ENCODE measurements at regions of chr16 and their contacts with region 1.

Region 1: GRCh38 chr16:30657866-30658730 is at the start of gene FBRS:
- DNase-seq: peak; percentile 99
- ATAC-seq: peak; percentile 81
- H3K4me3 ChIP-seq: peak within 1 kb of the TSS; percentile 89
- H3K27ac ChIP-seq: peak within 1 kb of the TSS; percentile 98
- H3K4me1 ChIP-seq: peaks cover 22% of the 10 kb centered on the region
- H3K27me3 ChIP-seq: no peaks in the 10 kb centered on the region
- CTCF ChIP-seq: peak; percentile 72 to 99 (median 75); a peak in 5 of 6 replicates
- EP300 ChIP-seq: no peak
- POLR2A ChIP-seq: peak; percentile 84
- RAD21 ChIP-seq: peak; percentile 35; the same call in 1 of the 2 replicates
- polyA plus RNA-seq, gene FBRS: 0.45 to 0.95 TPM

Region 2: GRCh38 chr16:30571695-30572600 is 86.2 kb before region 1 on chr16 and contains the start of gene ZNF688:
- CTCF ChIA-PET with region 1: no interaction called
- POLR2A ChIA-PET with region 1: no interaction called
- RAD21 ChIA-PET with region 1: no interaction called
- SMC1A ChIA-PET with region 1: no interaction called
- in situ Hi-C with region 1: no loop called
- intact Hi-C with region 1: loop called (anchors 10 kb)
- DNase-seq: peak; percentile 95
- ATAC-seq: peak; percentile 89
- H3K4me3 ChIP-seq: peak within 1 kb of the TSS; percentile 81
- H3K27ac ChIP-seq: peak within 1 kb of the TSS; percentile 93
- H3K4me1 ChIP-seq: peaks cover 26% of the 10 kb centered on the region
- H3K27me3 ChIP-seq: no peaks in the 10 kb centered on the region
- CTCF ChIP-seq: no peak
- EP300 ChIP-seq: no peak
- POLR2A ChIP-seq: peak; percentile 65
- RAD21 ChIP-seq: no peak
- polyA plus RNA-seq, gene ZNF688: 0.14 to 0.88 TPM

Region 3: GRCh38 chr16:30644334-30644830 is 13.7 kb before region 1 on chr16:
- CTCF ChIA-PET with region 1: interaction called, 3 read pairs
- POLR2A ChIA-PET with region 1: interaction called, 22 read pairs
- RAD21 ChIA-PET with region 1: interaction called, 5 read pairs
- SMC1A ChIA-PET with region 1: interaction called, 11 read pairs
- in situ Hi-C with region 1: no loop called
- intact Hi-C with region 1: no loop called
- DNase-seq: no peak
- ATAC-seq: no peak
- H3K4me3 ChIP-seq: no peak overlapping the region
- H3K27ac ChIP-seq: no peak overlapping the region
- H3K4me1 ChIP-seq: no peaks in the 10 kb centered on the region
- H3K27me3 ChIP-seq: no peaks in the 10 kb centered on the region
- CTCF ChIP-seq: no peak
- EP300 ChIP-seq: no peak
- POLR2A ChIP-seq: no peak
- RAD21 ChIP-seq: no peak

Region 4: GRCh38 chr16:30698139-30698815 is 40.2 kb after region 1 on chr16:
- CTCF ChIA-PET with region 1: interaction called, 61 read pairs
- POLR2A ChIA-PET with region 1: interaction called, 36 read pairs
- RAD21 ChIA-PET with region 1: interaction called, 64 read pairs
- SMC1A ChIA-PET with region 1: interaction called, 80 read pairs
- in situ Hi-C with region 1: loop called (anchors 5 kb)
- intact Hi-C with region 1: loop called (anchors 1 kb)
- DNase-seq: peak; percentile 89
- ATAC-seq: peak; percentile 82
- H3K4me3 ChIP-seq: peak overlapping the region; percentile 78
- H3K27ac ChIP-seq: peak overlapping the region; percentile 98
- H3K4me1 ChIP-seq: peaks cover 10% of the 10 kb centered on the region
- H3K27me3 ChIP-seq: no peaks in the 10 kb centered on the region
- CTCF ChIP-seq: no peak
- EP300 ChIP-seq: peak in 1 of 2 experiments; percentile 57; a peak in 1 of 4 replicates
- POLR2A ChIP-seq: peak; percentile 95
- RAD21 ChIP-seq: no peak

Region 5: DNA sequence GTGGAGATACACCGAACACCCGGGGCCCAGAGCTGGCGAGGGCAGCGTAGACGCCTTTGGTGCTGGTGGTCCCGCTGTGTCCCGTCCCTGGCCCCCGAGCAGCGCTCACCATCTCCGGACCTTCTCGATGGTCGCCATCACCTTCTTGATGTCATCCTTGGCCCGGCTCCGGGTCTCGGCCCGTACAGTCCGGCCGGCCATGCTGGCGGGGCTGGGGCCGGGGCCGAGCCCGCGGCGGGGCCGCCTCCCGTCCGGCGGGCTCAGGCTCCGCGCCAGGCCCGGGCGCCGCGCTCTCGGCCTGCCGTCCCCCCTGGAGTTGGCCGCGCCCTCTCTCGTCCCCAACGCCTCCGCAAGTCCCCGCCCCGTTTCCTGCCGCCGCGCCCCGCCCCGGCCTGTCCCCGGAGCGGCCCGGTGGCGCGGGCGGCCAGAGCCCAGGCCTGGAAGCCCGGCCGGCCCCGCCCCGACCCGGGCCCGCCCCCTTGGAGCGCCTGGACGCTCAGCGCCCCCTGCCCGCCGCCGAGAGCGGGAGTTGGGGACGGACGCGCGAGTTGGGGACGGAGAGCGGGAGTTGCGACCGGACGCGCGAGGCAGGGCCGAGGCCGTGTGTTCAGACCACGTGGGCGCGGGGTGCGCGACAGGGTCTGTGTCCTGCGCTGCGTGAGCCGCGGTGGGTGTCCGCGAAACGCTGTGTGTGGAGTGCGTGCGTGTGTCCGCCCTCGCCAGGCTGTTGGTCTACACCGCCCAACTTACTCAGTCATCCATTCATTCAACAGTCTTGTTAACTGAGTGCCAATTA is 235.8 kb after region 1 on chr16 and contains the start of gene BCL7C:
- CTCF ChIA-PET with region 1: no interaction called
- POLR2A ChIA-PET with region 1: no interaction called
- RAD21 ChIA-PET with region 1: no interaction called
- SMC1A ChIA-PET with region 1: no interaction called
- in situ Hi-C with region 1: no loop called
- intact Hi-C with region 1: loop called (anchors 10 kb)
- DNase-seq: no peak
- ATAC-seq: peak; percentile 90
- H3K4me3 ChIP-seq: peak within 1 kb of the TSS; percentile 93
- H3K27ac ChIP-seq: peak within 1 kb of the TSS; percentile 58
- H3K4me1 ChIP-seq: peaks cover 25% of the 10 kb centered on the region
- H3K27me3 ChIP-seq: no peaks in the 10 kb centered on the region
- CTCF ChIP-seq: peak; percentile 26 to 69 (median 45); a peak in 4 of 6 replicates
- EP300 ChIP-seq: no peak
- POLR2A ChIP-seq: peak; percentile 75
- RAD21 ChIP-seq: peak; percentile 45
- polyA plus RNA-seq, gene BCL7C: 1.1 to 2.1 TPM